MCF 10A (cell line): ENCODE measurements at regions of chr11 and their contacts with region 1.

Region 1: DNA sequence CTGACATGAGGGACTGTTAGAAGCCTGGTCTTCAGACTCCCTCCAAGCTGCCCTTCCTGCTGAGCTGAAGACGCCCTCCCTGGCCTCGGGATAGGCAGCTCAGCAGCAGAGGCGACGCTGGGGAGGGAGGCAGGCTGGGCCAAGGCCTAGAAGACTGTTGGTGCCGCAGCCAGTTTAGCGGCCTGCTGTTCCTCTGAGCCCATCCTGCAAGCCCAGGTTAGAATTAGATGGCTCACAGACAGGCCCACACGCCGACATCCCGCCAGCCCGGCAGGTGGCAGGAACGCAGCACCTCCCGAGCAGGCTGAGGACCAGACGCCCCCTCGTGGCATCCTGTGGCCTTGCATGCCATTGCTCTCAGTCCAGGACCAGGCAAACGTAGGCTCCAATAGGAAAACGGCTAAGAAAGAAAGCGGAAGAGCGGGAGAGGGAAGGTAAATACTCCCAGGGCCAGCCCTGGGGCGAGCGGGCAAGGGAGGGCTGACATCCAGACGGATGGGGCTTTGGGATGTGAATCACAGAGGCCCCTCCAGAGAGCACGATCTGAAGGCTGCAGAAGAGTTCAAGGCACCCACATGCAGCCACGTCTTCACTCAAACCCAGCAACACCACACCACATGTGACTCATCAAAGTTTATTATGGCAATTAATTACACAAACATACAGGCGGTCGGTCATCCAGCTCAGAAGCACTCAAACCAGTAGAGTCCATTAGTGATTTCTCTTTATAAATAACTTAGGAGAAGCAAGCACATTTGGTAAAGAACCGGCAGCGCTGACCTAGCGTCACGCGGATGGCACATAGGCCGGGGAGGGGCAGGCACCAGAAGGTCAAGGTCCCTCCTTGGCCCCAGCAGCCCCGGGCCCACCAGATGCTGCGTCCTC is 27.6 kb downstream of the CD5 start:
- DNase-seq: peak; percentile 83
- H3K4me3 Mint-ChIP-seq: peak overlapping the region; percentile 54
- H3K27ac Mint-ChIP-seq: peak overlapping the region; percentile 23
- H3K4me1 Mint-ChIP-seq: peaks cover 6% of the 10 kb centered on the region
- H3K27me3 Mint-ChIP-seq: no peaks in the 10 kb centered on the region
- CTCF ChIP-seq: peak; percentile 100

Region 2: DNA sequence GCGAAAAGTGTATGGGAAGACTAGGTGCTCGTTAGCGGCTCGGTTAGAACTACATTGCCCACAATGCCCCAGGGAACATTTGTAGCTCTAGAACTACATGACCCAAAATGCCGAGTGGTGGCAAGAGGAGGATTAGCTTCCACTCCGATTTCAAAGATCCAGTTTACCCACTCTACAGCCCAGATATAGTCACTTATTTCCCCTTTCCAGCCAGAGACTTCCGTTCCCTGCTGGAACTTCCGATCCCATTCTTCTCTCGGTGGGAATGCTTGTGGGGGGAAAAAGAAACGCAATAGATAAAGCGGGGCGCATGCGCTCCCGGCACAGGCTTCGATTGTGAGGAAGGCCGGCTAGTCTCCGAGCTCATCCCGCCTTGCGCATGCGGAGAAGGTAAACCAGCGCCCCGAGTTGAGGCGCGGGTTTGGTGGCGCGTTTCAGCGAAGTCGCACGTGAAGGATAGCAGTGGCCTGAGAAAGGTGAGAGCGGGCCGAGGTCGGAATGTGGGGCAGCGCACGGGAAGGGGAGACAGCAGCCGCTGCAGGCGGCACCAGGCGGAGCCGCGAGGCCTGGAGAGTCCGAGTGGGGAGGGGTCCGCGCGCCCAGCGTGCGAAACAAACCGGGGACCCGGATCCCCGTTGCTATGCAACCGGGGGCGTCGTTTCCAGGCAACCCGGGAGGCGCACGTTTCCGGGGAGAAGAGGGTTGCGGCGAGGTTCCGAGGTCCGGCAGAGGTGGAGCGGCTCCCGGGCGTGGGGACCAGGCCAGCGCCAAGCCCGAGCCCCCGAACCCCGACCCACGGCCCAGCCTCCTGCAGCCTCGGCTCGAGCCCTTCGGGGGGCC is 215.9 kb before region 1 on chr11 and contains the start of gene TMEM109:
- CTCF ChIA-PET with region 1: interaction called, 5 read pairs
- POLR2A ChIA-PET with region 1: no interaction called
- intact Hi-C with region 1: loop called (anchors 1 kb)
- DNase-seq: peak; percentile 90
- H3K4me3 Mint-ChIP-seq: peak within 1 kb of the TSS; percentile 97
- H3K27ac Mint-ChIP-seq: peak within 1 kb of the TSS; percentile 95
- H3K4me1 Mint-ChIP-seq: peaks cover 23% of the 10 kb centered on the region
- H3K27me3 Mint-ChIP-seq: peaks cover 6% of the 10 kb centered on the region
- CTCF ChIP-seq: no peak
- total RNA-seq, gene TMEM109: 39.5 and 45.8 TPM in 2 replicates

Region 3: GRCh38 chr11:60970369-60970774 is 159.5 kb before region 1 on chr11:
- CTCF ChIA-PET with region 1: interaction called, 11 read pairs
- POLR2A ChIA-PET with region 1: no interaction called
- intact Hi-C with region 1: loop called (anchors 1 kb)
- DNase-seq: peak; percentile 54
- H3K4me3 Mint-ChIP-seq: no peak overlapping the region
- H3K27ac Mint-ChIP-seq: no peak overlapping the region
- H3K4me1 Mint-ChIP-seq: no peaks in the 10 kb centered on the region
- H3K27me3 Mint-ChIP-seq: no peaks in the 10 kb centered on the region
- CTCF ChIP-seq: peak; percentile 73

Region 4: GRCh38 chr11:61141601-61142028 is 11.7 kb after region 1 on chr11:
- CTCF ChIA-PET with region 1: interaction called, 34 read pairs
- POLR2A ChIA-PET with region 1: no interaction called
- intact Hi-C with region 1: no loop called
- DNase-seq: peak; percentile 12
- H3K4me3 Mint-ChIP-seq: no peak overlapping the region
- H3K27ac Mint-ChIP-seq: no peak overlapping the region
- H3K4me1 Mint-ChIP-seq: no peaks in the 10 kb centered on the region
- H3K27me3 Mint-ChIP-seq: no peaks in the 10 kb centered on the region
- CTCF ChIP-seq: no peak

Region 5: DNA sequence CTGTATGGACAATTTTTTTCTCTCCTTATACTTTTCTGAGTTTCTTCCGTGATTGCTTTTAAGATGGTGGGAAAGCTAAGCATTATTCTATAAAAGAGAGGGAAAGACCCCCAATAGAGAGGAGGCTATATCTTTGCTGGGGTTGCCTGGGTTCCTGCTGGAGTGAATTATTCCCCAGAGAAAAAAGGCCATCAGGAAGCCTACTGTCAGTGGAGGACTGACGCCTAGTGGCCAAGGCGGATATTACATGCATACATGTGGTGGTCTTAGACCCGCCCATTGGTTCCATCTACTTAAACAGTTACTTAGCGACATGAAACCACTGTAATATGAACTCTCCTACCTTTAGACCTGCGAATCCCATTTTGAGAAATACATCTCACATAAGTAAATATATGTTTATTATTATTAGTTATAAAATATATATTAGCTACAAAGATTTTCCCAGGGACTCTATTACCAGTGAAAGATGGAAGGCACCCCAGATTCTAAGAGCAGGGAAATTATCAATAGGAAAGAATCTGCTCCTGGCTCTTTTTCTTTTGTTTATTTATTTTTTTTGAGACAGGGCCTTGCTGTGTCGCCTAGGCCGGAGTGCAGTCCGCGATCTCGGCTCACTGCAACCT is 57.7 kb after region 1 on chr11:
- CTCF ChIA-PET with region 1: interaction called, 16 read pairs
- POLR2A ChIA-PET with region 1: interaction called, 3 read pairs
- intact Hi-C with region 1: loop called (anchors 1 kb)
- DNase-seq: peak; percentile 73
- H3K4me3 Mint-ChIP-seq: no peak overlapping the region
- H3K27ac Mint-ChIP-seq: no peak overlapping the region
- H3K4me1 Mint-ChIP-seq: no peaks in the 10 kb centered on the region
- H3K27me3 Mint-ChIP-seq: no peaks in the 10 kb centered on the region
- CTCF ChIP-seq: peak; percentile 88